Kidney (tissue), 22 donors: ENCODE measurements at regions of chr15 and their contacts with region 1.

Region 1: DNA sequence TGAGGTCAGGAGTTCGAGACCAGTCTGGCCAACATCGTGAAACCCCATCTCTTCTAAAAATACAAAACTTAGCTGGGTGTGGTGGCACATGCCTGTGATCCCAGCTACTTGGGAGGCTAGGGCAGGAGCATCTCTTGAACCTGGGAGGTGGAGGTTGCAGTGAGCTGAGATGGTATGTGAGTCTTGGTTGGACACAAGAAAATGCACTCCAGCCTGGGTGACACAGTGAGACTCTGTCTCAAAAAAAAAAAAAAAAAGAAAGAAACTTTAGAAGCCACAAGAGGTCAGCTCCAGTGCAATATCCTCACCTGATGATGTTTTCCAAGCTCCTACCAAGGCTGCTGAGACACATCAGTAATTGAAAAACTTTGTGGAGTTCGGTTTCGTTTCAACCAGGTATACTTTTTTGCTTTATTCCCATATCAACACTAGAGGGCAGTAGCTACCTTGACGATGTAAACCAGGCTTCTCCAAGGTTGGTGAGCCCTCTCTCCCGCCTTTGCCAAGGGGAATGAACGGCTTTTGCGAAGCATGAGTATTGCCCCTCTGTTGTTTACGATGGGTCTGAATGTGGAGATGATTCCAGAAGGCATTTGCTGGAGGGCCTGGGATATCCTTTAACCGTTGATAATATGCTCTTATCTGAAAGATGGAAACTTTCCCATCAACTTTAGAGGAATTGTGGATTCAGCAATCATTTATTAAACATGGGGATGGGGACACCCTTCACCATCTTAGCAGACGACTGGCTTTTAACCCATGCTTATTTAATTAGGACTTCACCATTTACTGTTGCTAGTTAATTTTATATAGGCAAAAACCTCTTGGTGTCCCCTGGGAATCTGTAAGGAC is 202.8 kb downstream of the SV2B start:
- DNase-seq: peak in 4 of 5 donors; percentile 40 to 89 (median 71)
- H3K4me3 ChIP-seq: no peak overlapping the region
- H3K27ac ChIP-seq: no peak overlapping the region
- H3K4me1 ChIP-seq: no peaks in the 10 kb centered on the region
- H3K27me3 ChIP-seq: peaks cover 3% of the 10 kb centered on the region
- CTCF ChIP-seq: peak; percentile 51

Region 2: DNA sequence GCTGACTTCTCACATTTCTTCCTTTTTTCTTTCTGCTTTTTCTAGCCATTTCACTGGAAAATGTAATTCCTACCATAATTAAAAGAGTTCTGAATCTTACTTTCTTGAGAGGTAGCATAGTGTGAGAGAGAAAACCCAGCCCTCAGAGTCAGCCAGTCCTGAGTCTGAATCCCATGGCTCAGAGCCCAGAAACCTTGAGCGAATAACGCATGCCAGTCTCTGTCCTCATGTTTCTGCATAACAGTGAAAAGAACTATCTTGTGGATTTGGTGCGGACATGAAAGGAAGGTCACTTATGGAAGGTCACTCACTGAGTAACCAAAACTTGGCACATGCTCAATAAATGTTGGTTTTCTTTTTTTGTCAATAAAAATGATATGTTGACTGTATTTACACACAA is 521.4 kb after region 1 on chr15:
- intact Hi-C with region 1: loop called (anchors 10 kb)
- DNase-seq: no peak
- H3K4me3 ChIP-seq: no peak overlapping the region
- H3K27ac ChIP-seq: no peak overlapping the region
- H3K4me1 ChIP-seq: no peaks in the 10 kb centered on the region
- H3K27me3 ChIP-seq: no peaks in the 10 kb centered on the region
- CTCF ChIP-seq: no peak